Pancreas (tissue), 10 donors: ENCODE measurements at regions of chr2 and their contacts with region 1.

Region 1: GRCh38 chr2:36441816-36442215 is 86.2 kb downstream of the CRIM1 start:
- DNase-seq: no peak
- ATAC-seq: no peak
- H3K4me3 ChIP-seq: no peak overlapping the region
- H3K27ac ChIP-seq: no peak overlapping the region
- H3K4me1 ChIP-seq: no peaks in the 10 kb centered on the region
- H3K27me3 ChIP-seq: no peaks in the 10 kb centered on the region
- CTCF ChIP-seq: no peak

Region 2: DNA sequence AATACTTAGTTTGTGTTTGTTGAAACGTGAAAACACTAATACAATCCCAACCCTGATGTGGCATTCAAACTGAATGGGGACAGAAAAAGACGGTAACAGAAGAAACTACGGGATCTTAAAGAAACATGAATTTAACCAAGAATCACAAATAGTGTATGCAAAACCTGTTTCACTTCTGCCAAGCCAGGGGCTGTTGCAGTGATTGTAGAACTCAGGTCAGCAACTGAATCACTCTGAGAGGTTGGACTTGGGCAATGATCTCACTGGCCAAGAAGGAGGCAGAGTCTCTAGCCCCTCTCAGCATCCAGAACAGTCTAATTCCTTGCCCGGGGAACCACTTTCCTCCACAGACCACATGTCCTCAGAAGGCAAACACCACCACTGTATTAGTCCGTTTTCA is 141.1 kb before region 1 on chr2:
- intact Hi-C with region 1: no loop called
- DNase-seq: no peak
- ATAC-seq: no peak
- H3K4me3 ChIP-seq: no peak overlapping the region
- H3K27ac ChIP-seq: no peak overlapping the region
- H3K4me1 ChIP-seq: no peaks in the 10 kb centered on the region
- H3K27me3 ChIP-seq: no peaks in the 10 kb centered on the region
- CTCF ChIP-seq: no peak

Region 3: GRCh38 chr2:36367895-36368353 is 73.9 kb before region 1 on chr2:
- intact Hi-C with region 1: loop called in 1 of 3 experiments (anchors 10 kb)
- DNase-seq: no peak
- ATAC-seq: peak; percentile 43 to 60 (median 53)
- H3K4me3 ChIP-seq: no peak overlapping the region
- H3K27ac ChIP-seq: peak overlapping the region in 2 of 4 donors; percentile 42 to 57
- H3K4me1 ChIP-seq: peaks cover 0 to 30% (median 20%) of the 10 kb centered on the region in 3 donors
- H3K27me3 ChIP-seq: no peaks in the 10 kb centered on the region
- CTCF ChIP-seq: no peak